Sigmoid colon (tissue), 7 donors: ENCODE measurements at regions of chr16 and their contacts with region 1.

Region 1: DNA sequence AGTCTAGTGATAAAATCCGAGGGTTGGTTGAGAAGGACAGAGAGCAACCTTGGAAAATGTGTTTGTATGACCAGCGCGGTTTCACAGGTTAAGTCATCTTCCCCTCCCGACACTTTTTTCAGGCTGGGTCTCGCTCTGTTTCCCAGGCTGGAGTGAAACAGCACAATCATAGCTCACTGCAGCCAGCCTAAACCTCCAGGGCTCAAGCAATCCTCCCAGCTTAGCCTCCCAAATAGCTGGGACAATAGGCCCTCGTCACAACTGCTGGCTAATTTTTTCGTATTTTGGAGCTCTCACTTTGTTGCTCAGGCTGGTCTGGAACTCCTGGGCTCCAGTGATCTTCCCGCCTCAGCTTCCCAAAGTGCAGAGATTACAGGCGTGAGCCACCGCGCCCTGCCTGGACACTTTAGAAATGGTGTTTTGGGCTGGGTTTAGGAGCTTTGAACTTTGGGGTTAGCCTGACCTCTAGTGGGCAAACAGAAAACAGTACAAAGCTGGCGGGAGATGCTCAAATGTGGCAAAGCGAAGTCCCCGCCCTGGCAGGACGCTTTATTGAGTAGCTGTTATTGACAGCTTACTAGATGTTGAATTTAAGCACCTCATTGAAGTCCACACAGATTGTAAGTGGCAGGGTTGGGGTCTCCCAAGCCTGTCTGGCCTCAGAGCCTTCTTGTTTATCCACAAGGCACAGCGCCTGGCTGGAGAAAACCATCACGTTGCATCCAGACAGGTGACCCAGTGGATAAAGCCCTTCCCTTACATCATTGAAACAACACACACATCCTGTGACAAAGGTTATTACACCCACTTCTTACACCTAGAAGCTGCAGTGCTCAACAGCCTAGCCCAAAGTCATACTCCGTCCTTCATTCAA is 34.7 kb upstream of the RBBP6 start:
- DNase-seq: peak; percentile 66
- H3K4me3 ChIP-seq: no peak overlapping the region
- H3K27ac ChIP-seq: no peak overlapping the region
- H3K4me1 ChIP-seq: no peaks in the 10 kb centered on the region
- H3K27me3 ChIP-seq: no peaks in the 10 kb centered on the region
- CTCF ChIP-seq: peak; percentile 18 to 64 (median 52)
- EP300 ChIP-seq: no peak
- POLR2A ChIP-seq: no peak

Region 2: GRCh38 chr16:24041826-24042631 is 462.7 kb before region 1 on chr16:
- intact Hi-C with region 1: loop called (anchors 2 kb)
- DNase-seq: no peak
- H3K4me3 ChIP-seq: no peak overlapping the region
- H3K27ac ChIP-seq: no peak overlapping the region
- H3K4me1 ChIP-seq: no peaks in the 10 kb centered on the region
- H3K27me3 ChIP-seq: no peaks in the 10 kb centered on the region
- CTCF ChIP-seq: peak in 3 of 4 experiments; percentile 47 to 67 (median 49)
- EP300 ChIP-seq: no peak
- POLR2A ChIP-seq: no peak

Region 3: GRCh38 chr16:24221219-24221618 is 283.5 kb before region 1 on chr16:
- intact Hi-C with region 1: no loop called
- DNase-seq: no peak
- H3K4me3 ChIP-seq: no peak overlapping the region
- H3K27ac ChIP-seq: no peak overlapping the region
- H3K4me1 ChIP-seq: no peaks in the 10 kb centered on the region
- H3K27me3 ChIP-seq: no peaks in the 10 kb centered on the region
- CTCF ChIP-seq: no peak
- EP300 ChIP-seq: no peak
- POLR2A ChIP-seq: no peak

Region 4: DNA sequence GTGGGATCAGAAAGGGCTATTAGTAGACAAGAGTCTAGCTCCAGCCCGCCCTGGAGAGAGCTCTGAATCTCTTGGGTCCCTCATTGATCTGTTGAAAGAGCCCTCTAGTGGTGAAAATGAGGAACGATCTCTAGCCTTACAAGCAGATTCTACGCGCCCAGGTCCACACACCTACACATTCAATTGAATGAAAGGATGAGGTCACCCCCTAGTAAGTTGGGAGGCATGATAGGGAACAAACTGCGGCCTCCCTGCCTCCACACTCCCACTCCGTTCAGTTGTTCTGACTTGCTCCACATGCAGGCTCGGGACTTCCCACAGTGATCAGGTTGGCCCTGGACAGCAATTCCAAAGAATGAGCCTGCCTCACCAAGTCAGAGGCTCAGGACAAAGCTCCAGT is 251.5 kb before region 1 on chr16:
- intact Hi-C with region 1: loop called (anchors 5 kb)
- DNase-seq: no peak
- H3K4me3 ChIP-seq: no peak overlapping the region
- H3K27ac ChIP-seq: no peak overlapping the region
- H3K4me1 ChIP-seq: peaks cover 0 to 5% (median 0%) of the 10 kb centered on the region in 4 donors
- H3K27me3 ChIP-seq: peaks cover 5 to 52% (median 33%) of the 10 kb centered on the region in 3 donors
- CTCF ChIP-seq: peak in 3 of 4 experiments; percentile 31 to 64 (median 39)
- EP300 ChIP-seq: no peak
- POLR2A ChIP-seq: no peak